PC-9 (cell line): ENCODE measurements at regions of chr16 and their contacts with region 1.

Region 1: GRCh38 chr16:69812688-69813014 is 50.5 kb downstream of the WWP2 start:
- DNase-seq: no peak
- H3K4me3 ChIP-seq: no peak overlapping the region
- H3K27ac ChIP-seq: peak overlapping the region; percentile 40
- H3K4me1 ChIP-seq: no peaks in the 10 kb centered on the region
- H3K27me3 ChIP-seq: no peaks in the 10 kb centered on the region
- CTCF ChIP-seq: no peak

Region 2: DNA sequence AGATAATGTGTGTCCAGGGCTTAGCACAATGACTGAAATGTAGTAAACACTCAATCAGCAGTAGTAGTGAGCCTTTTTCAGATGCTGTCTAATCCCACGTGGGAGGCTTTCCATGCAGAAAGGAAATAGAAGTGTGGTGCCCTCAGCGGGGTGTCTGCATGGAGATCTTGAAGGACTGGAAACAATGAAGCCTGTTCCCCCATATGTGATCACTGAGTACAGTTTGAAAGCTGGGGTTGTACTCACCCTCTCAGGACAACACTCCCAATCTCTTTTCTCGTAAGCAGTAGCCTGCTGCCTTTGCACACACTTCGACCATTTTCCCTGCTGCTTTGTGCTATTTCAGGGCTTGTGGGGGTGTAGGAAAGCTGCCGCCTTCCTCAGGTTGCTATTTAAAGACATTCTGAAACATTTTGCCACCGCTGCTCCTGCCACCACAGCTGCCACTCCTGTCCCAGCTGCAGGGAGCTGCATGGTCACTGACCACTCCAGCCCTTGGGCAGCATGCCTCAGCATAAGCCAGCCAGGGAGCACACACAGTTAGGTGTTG is 747.8 kb before region 1 on chr16:
- CTCF ChIA-PET with region 1: interaction called, 15 read pairs
- POLR2A ChIA-PET with region 1: no interaction called
- intact Hi-C with region 1: no loop called
- DNase-seq: no peak
- H3K4me3 ChIP-seq: no peak overlapping the region
- H3K27ac ChIP-seq: peak overlapping the region; percentile 43; the same call in 1 of the 2 replicates
- H3K4me1 ChIP-seq: peaks cover 28% of the 10 kb centered on the region
- H3K27me3 ChIP-seq: no peaks in the 10 kb centered on the region
- CTCF ChIP-seq: no peak